ENCODE measurements at regions of chr7 and their contacts with region 1.

Region 1: GRCh38 chr7:155356323-155357105 is 58.8 kb downstream of the INSIG1 start:
- DNase-seq: no peak
- CTCF ChIP-seq: peak; percentile 9

Region 2: DNA sequence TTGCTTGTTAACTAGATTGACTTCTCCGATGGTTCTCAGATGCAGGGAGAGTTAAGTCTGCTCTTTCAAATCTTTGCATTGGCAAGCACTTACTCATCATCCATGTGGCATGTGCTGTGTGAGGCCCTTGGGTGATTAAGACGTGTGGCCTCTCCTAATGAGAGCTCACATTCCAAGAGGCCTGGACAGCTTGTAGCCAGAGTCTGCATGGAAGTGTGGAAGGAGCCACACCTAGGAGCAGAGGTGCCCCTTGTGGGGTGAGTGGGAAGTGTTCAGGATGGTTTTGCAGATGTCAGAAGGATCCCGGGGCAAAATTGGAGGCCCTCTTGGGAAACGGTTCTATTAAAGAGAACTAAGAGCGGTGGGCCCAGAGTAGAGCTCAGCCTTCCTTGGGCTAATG is 579.5 kb before region 1 on chr7:
- CTCF ChIA-PET with region 1: no interaction called
- POLR2A ChIA-PET with region 1: no interaction called
- DNase-seq: no peak
- CTCF ChIP-seq: no peak

Region 3: DNA sequence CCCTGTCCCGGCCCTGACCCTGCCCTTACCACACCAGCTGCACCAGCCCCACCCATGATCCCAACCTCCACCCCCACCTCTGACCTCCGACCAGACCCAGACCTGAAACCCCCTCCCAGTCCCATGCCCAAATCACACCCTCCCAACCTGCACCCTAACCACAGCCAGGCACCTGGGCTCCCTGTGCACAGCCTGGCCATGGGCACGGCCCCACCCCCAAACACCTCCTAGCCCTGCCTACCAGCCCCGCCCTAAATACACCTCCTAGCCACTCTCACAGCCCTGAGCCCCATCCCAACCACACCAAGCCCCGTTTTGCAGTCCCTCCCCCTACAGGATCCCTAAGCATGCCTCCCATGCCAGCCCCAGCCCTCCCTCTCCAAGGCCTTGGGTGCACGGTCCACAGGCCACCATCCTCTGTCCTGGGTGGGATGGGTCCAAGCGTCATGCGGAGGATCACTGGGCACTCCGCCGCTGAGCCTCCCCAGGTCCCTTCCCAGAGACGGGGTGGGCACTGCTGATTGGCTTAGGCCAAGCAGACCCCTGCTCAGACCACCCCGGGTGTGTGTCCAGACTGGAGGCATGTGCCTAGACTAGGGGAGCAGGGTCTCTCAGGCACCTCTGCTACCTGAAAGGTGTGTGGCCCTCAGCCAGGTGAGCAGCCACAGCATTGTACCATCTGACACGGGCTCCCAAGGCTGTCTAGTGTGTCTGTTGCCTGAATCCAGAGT is 28.8 kb before region 1 on chr7:
- CTCF ChIA-PET with region 1: no interaction called
- POLR2A ChIA-PET with region 1: no interaction called
- DNase-seq: no peak
- CTCF ChIP-seq: no peak

Region 4: DNA sequence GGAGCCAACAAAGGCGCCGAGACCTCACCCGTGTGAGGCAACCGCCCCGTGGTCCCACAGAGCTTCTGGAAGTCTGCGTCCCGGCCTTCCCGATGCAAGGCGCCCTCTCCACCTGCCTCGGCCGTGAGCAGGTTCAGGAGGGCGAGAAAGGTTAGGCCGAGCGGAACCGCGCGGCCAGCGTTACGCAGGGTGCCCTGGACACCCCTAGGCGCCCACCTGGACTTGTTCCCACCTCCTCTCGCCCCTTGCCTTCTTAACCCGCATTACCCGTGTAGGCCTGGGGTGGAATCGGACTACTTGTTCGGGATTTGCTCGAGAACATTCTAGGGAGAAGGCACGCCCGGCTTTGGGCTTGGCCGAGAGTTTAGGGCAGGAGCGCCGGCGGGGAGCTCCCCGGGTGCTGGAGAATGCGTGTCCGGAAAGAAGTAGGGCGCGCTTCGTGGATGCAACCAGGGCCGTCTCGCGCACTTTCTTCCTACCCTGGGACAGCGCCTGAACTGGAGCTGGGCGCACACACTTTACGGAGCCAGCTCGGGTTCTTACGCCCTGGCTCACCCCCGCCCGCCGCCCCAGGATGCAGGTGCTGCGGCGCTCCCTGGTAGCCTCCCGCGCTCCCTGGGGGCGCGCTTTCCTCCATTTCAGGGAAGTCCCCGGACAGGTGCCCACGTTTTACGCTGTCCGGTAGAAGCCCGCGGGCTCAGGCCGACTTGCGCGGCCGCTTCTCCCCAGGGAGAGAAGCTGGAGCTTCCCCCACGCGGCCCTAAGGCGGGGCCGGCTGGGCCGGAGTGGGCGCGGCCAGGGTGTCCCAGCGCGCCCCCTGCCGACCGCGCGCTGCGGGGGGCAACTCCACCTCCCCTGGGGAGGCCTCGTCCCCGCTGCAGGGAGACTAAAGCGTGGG is 15.6 kb after region 1 on chr7:
- CTCF ChIA-PET with region 1: interaction called, 10 read pairs
- POLR2A ChIA-PET with region 1: no interaction called
- DNase-seq: peak; percentile 69
- CTCF ChIP-seq: peak; percentile 67

Measured in GM10248 (cell line).